ENCODE measurements at regions of chr7 and their contacts with region 1.

Region 1: GRCh38 chr7:112449902-112450806 is at the start of gene IFRD1:
- DNase-seq: peak; percentile 98
- ATAC-seq: peak; percentile 83
- H3K4me3 Mint-ChIP-seq: peak within 1 kb of the TSS; percentile 97
- H3K27ac Mint-ChIP-seq: peak within 1 kb of the TSS; percentile 99
- H3K4me1 Mint-ChIP-seq: peaks cover 39% of the 10 kb centered on the region
- H3K27me3 Mint-ChIP-seq: no peaks in the 10 kb centered on the region
- CTCF ChIP-seq: no peak
- total RNA-seq, gene IFRD1: 54.1 to 54.5 TPM

Region 2: GRCh38 chr7:112129655-112130323 is 320.4 kb before region 1 on chr7:
- CTCF ChIA-PET with region 1: no interaction called
- POLR2A ChIA-PET with region 1: no interaction called
- intact Hi-C with region 1: no loop called
- DNase-seq: no peak
- ATAC-seq: no peak
- H3K4me3 Mint-ChIP-seq: no peak overlapping the region
- H3K27ac Mint-ChIP-seq: no peak overlapping the region
- H3K4me1 Mint-ChIP-seq: no peaks in the 10 kb centered on the region
- H3K27me3 Mint-ChIP-seq: peaks cover 3% of the 10 kb centered on the region
- CTCF ChIP-seq: no peak

Region 3: DNA sequence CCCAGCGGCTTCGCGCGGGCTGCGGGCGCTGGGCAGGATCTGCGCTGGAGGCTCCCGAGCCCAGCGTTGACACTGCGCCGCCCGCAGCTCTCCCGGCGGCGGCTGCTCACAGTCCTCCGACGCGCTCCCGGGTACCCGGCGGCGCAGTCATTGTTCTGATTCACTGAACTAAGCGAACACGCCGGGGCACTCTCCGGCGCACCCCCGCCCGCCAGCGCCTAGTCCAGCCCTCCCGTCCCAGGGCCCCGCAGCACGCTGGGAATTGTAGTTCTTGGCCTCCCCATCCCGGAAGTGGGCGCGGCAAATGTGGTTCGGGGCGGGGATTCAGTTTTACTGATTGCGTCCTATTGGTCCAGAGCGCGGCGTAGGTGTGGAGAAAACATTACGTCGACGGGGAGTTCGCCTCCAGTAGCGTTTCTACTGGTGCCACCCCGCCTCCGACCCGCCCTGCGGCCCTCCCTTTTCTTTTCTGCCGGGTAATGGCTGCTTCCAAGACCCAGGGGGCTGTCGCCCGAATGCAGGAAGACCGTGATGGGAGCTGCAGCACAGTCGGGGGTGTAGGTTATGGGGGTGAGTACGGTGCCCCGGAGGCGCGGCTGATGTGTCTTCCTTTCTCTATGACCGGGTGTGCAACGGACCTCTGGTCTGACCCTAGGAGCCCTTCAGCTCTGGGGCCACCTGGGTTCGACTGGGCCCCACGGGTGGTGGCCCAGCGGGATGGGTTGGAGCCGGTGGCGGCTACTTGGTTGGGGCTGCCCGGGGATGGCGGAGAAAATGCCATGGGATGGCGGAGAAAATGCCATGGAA is 243.7 kb before region 1 on chr7 and contains the starts of genes DOCK4 and ZNF277:
- CTCF ChIA-PET with region 1: no interaction called
- POLR2A ChIA-PET with region 1: interaction called, 26 read pairs
- intact Hi-C with region 1: loop called (anchors 5 kb)
- DNase-seq: peak; percentile 99
- ATAC-seq: peak; percentile 94
- H3K4me3 Mint-ChIP-seq: peak within 1 kb of the TSS; percentile 94
- H3K27ac Mint-ChIP-seq: peak within 1 kb of the TSS; percentile 84
- H3K4me1 Mint-ChIP-seq: peaks cover 33% of the 10 kb centered on the region
- H3K27me3 Mint-ChIP-seq: peaks cover 28% of the 10 kb centered on the region
- CTCF ChIP-seq: no peak
- total RNA-seq, gene DOCK4: 0.31 to 0.32 TPM
- total RNA-seq, gene ZNF277: 21.5 to 25.8 TPM

Region 4: GRCh38 chr7:112398534-112398933 is 51.6 kb before region 1 on chr7:
- CTCF ChIA-PET with region 1: no interaction called
- POLR2A ChIA-PET with region 1: interaction called, 3 read pairs
- intact Hi-C with region 1: loop called (anchors 2 kb)
- DNase-seq: no peak
- ATAC-seq: peak; percentile 55
- H3K4me3 Mint-ChIP-seq: no peak overlapping the region
- H3K27ac Mint-ChIP-seq: no peak overlapping the region
- H3K4me1 Mint-ChIP-seq: peaks cover 11% of the 10 kb centered on the region
- H3K27me3 Mint-ChIP-seq: peaks cover 3% of the 10 kb centered on the region
- CTCF ChIP-seq: no peak

Region 5: DNA sequence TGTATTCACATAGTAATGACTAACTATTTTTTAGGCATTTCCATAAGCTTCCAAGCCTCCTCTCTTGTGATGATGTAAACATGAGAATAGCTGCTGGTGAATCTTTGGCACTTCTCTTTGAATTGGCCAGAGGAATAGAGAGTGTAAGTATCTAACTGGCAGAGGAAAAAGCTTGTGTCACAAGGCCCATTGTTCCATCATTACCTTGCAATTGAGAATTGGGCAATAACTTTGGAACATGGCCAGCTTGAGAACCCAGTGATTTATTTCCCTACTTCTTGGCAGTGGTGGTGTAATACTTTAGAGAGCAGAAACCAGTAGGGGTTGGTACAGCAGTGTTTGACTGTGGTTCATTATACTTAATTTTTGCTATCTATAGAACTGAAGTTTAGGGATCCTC is 12.1 kb after region 1 on chr7:
- CTCF ChIA-PET with region 1: interaction called, 11 read pairs
- POLR2A ChIA-PET with region 1: interaction called, 30 read pairs
- intact Hi-C with region 1: no loop called
- DNase-seq: no peak
- ATAC-seq: no peak
- H3K4me3 Mint-ChIP-seq: no peak overlapping the region
- H3K27ac Mint-ChIP-seq: no peak overlapping the region
- H3K4me1 Mint-ChIP-seq: no peaks in the 10 kb centered on the region
- H3K27me3 Mint-ChIP-seq: no peaks in the 10 kb centered on the region
- CTCF ChIP-seq: no peak

Region 6: GRCh38 chr7:112470194-112470593 is 20.0 kb after region 1 on chr7:
- CTCF ChIA-PET with region 1: interaction called, 11 read pairs
- POLR2A ChIA-PET with region 1: interaction called, 30 read pairs
- intact Hi-C with region 1: no loop called
- DNase-seq: no peak
- ATAC-seq: no peak
- H3K4me3 Mint-ChIP-seq: no peak overlapping the region
- H3K27ac Mint-ChIP-seq: no peak overlapping the region
- H3K4me1 Mint-ChIP-seq: no peaks in the 10 kb centered on the region
- H3K27me3 Mint-ChIP-seq: no peaks in the 10 kb centered on the region
- CTCF ChIP-seq: no peak

Region 7: GRCh38 chr7:112500619-112501018 is 50.5 kb after region 1 on chr7:
- CTCF ChIA-PET with region 1: no interaction called
- POLR2A ChIA-PET with region 1: no interaction called
- intact Hi-C with region 1: no loop called
- DNase-seq: no peak
- ATAC-seq: no peak
- H3K4me3 Mint-ChIP-seq: no peak overlapping the region
- H3K27ac Mint-ChIP-seq: no peak overlapping the region
- H3K4me1 Mint-ChIP-seq: no peaks in the 10 kb centered on the region
- H3K27me3 Mint-ChIP-seq: peaks cover 4% of the 10 kb centered on the region
- CTCF ChIP-seq: no peak

Region 8: GRCh38 chr7:112757337-112757736 is 307.2 kb after region 1 on chr7:
- CTCF ChIA-PET with region 1: no interaction called
- POLR2A ChIA-PET with region 1: no interaction called
- intact Hi-C with region 1: no loop called
- DNase-seq: no peak
- ATAC-seq: no peak
- H3K4me3 Mint-ChIP-seq: no peak overlapping the region
- H3K27ac Mint-ChIP-seq: no peak overlapping the region
- H3K4me1 Mint-ChIP-seq: peaks cover 5% of the 10 kb centered on the region
- H3K27me3 Mint-ChIP-seq: no peaks in the 10 kb centered on the region
- CTCF ChIP-seq: no peak

Region 9: DNA sequence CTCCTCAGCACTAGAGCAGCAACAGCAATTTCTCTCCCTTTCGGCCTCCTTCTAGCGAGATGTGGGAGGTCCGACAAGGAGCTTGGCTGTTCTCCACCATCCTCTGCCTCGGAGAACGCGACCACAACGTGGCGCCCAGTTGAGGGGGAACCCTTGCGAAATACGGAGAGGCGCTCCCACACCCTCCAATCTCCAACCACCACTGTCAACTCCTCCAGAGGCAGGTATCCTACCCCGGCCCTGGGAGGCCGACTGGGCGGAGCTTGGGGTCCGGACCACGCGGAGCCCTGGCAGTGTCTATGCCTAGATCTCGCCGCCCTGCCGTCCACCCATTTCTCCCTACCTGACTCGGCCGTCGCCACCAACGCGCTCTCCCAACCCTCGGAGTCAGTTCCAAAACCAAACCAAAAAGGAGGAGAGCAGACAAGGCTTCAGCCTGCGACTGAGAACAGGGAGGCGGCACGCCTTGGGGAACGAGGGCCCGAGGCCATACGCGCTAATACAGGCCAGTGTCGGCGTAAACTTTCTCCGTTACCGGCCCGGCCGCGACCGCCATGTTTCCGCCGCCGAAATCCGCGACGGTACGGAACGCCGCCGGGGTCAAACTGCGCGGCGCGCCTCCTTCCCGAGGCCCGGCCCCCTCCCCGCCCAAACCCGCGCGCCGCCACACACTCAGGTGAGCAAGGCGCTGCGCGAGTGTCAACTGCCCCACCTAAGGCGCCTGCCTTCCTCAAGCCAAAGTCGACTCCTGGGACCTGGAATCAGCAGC is 339.8 kb after region 1 on chr7 and contains the start of gene TMEM168:
- CTCF ChIA-PET with region 1: no interaction called
- POLR2A ChIA-PET with region 1: interaction called, 6 read pairs
- intact Hi-C with region 1: loop called (anchors 10 kb)
- DNase-seq: peak; percentile 87
- ATAC-seq: peak; percentile 88
- H3K4me3 Mint-ChIP-seq: peak within 1 kb of the TSS; percentile 98
- H3K27ac Mint-ChIP-seq: peak within 1 kb of the TSS; percentile 89
- H3K4me1 Mint-ChIP-seq: peaks cover 41% of the 10 kb centered on the region
- H3K27me3 Mint-ChIP-seq: no peaks in the 10 kb centered on the region
- CTCF ChIP-seq: no peak
- total RNA-seq, gene TMEM168: 15.2 to 15.5 TPM